ENCODE measurements at regions of chr1 and their contacts with region 1.

Region 1: DNA sequence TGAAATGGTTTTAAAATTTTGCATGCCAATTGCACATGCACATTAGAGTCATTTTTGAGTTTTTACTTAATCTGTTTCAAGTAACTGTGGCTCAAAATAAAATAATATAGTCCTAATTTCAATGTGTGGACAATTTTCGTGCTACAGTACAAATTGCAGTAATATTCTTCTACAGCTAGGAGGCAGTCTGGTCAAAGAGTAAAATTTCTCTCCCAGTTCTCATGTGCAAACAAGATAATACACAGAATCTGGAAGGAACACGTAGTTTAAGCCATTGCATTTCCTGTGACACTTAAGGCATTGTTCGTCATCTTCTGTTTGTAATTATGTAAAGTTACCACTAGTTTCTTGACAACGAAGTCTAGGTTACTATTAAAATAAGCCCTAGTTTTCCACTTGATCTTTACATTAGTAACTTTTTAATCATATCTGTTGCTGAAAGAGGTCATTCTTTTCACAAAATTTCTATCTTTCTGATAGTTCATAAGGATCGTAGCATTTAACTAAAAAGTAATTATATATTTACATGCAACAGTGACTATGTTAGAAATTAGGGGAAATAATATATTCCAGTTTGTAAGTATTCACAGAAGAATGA is 28.9 kb downstream of the ODR4 start:
- DNase-seq: peak; percentile 52
- ATAC-seq: no peak
- H3K4me3 ChIP-seq: no peak overlapping the region
- H3K27ac ChIP-seq: no peak overlapping the region
- H3K4me1 ChIP-seq: no peaks in the 10 kb centered on the region
- H3K27me3 ChIP-seq: no peaks in the 10 kb centered on the region
- CTCF ChIP-seq: peak; percentile 73

Region 2: GRCh38 chr1:186094170-186094569 is 310.4 kb before region 1 on chr1:
- CTCF ChIA-PET with region 1: no interaction called
- POLR2A ChIA-PET with region 1: no interaction called
- intact Hi-C with region 1: no loop called
- DNase-seq: peak; percentile 23
- ATAC-seq: no peak
- H3K4me3 ChIP-seq: no peak overlapping the region
- H3K27ac ChIP-seq: no peak overlapping the region
- H3K4me1 ChIP-seq: peaks cover 14% of the 10 kb centered on the region
- H3K27me3 ChIP-seq: no peaks in the 10 kb centered on the region
- CTCF ChIP-seq: no peak

Region 3: GRCh38 chr1:186337554-186337953 is 67.0 kb before region 1 on chr1:
- CTCF ChIA-PET with region 1: no interaction called
- POLR2A ChIA-PET with region 1: no interaction called
- intact Hi-C with region 1: no loop called
- DNase-seq: no peak
- ATAC-seq: no peak
- H3K4me3 ChIP-seq: no peak overlapping the region
- H3K27ac ChIP-seq: no peak overlapping the region
- H3K4me1 ChIP-seq: no peaks in the 10 kb centered on the region
- H3K27me3 ChIP-seq: no peaks in the 10 kb centered on the region
- CTCF ChIP-seq: no peak

Region 4: GRCh38 chr1:186511761-186512637 is 107.4 kb after region 1 on chr1:
- CTCF ChIA-PET with region 1: no interaction called
- POLR2A ChIA-PET with region 1: no interaction called
- intact Hi-C with region 1: no loop called
- DNase-seq: peak; percentile 46
- ATAC-seq: peak; percentile 81
- H3K4me3 ChIP-seq: no peak overlapping the region
- H3K27ac ChIP-seq: no peak overlapping the region
- H3K4me1 ChIP-seq: peaks cover 12% of the 10 kb centered on the region
- H3K27me3 ChIP-seq: no peaks in the 10 kb centered on the region
- CTCF ChIP-seq: no peak

Region 5: GRCh38 chr1:186577197-186577596 is 172.6 kb after region 1 on chr1:
- CTCF ChIA-PET with region 1: no interaction called
- POLR2A ChIA-PET with region 1: no interaction called
- intact Hi-C with region 1: no loop called
- DNase-seq: peak; percentile 55
- ATAC-seq: no peak
- H3K4me3 ChIP-seq: no peak overlapping the region
- H3K27ac ChIP-seq: peak overlapping the region; percentile 96
- H3K4me1 ChIP-seq: peaks cover 27% of the 10 kb centered on the region
- H3K27me3 ChIP-seq: no peaks in the 10 kb centered on the region
- CTCF ChIP-seq: no peak

Region 6: GRCh38 chr1:186680245-186681061 is 275.9 kb after region 1 on chr1 and contains the start of gene PTGS2:
- CTCF ChIA-PET with region 1: no interaction called
- POLR2A ChIA-PET with region 1: no interaction called
- intact Hi-C with region 1: loop called (anchors 5 kb)
- DNase-seq: peak; percentile 55
- ATAC-seq: peak; percentile 92
- H3K4me3 ChIP-seq: peak within 1 kb of the TSS; percentile 65
- H3K27ac ChIP-seq: peak within 1 kb of the TSS; percentile 14; the same call in 1 of the 2 replicates
- H3K4me1 ChIP-seq: no peaks in the 10 kb centered on the region
- H3K27me3 ChIP-seq: no peaks in the 10 kb centered on the region
- CTCF ChIP-seq: peak; percentile 47; the same call in 1 of the 2 replicates
- total RNA-seq, gene PTGS2: 4.9 and 7.9 TPM in 2 replicates

Region 7: DNA sequence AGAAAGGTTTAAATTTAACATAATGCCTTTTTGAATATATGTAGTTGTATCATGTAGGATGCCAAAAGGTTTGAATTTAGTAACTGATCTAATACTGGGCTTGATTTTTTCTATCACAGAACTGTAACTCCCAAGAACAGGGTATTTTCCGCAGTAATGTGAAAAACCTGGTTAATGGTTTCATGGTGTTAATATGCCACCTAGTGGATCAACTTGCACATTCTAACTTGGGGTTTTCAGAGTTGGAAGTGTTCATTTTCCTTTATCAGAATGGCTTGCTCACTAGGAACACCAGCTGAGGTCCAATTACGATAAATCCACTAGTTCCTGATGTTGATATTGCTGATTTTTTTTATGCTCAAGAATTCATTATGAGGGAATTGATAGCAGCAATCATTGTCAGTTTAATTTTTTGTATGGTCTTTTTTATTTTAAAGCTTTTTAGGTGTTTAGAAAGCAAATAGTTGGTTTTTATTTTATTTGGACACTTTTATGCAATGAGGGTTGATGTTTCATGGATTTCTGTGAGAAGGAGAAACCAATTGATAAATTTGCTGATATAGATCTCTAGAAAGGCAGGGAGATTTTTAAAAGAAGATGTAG is 581.4 kb after region 1 on chr1:
- CTCF ChIA-PET with region 1: no interaction called
- POLR2A ChIA-PET with region 1: no interaction called
- intact Hi-C with region 1: loop called (anchors 10 kb)
- DNase-seq: peak; percentile 73
- ATAC-seq: peak; percentile 59
- H3K4me3 ChIP-seq: no peak overlapping the region
- H3K27ac ChIP-seq: no peak overlapping the region
- H3K4me1 ChIP-seq: no peaks in the 10 kb centered on the region
- H3K27me3 ChIP-seq: no peaks in the 10 kb centered on the region
- CTCF ChIP-seq: peak; percentile 77

Measured in PC-3 (cell line).